ENCODE measurements at regions of chr7 and their contacts with region 1.

Region 1: DNA sequence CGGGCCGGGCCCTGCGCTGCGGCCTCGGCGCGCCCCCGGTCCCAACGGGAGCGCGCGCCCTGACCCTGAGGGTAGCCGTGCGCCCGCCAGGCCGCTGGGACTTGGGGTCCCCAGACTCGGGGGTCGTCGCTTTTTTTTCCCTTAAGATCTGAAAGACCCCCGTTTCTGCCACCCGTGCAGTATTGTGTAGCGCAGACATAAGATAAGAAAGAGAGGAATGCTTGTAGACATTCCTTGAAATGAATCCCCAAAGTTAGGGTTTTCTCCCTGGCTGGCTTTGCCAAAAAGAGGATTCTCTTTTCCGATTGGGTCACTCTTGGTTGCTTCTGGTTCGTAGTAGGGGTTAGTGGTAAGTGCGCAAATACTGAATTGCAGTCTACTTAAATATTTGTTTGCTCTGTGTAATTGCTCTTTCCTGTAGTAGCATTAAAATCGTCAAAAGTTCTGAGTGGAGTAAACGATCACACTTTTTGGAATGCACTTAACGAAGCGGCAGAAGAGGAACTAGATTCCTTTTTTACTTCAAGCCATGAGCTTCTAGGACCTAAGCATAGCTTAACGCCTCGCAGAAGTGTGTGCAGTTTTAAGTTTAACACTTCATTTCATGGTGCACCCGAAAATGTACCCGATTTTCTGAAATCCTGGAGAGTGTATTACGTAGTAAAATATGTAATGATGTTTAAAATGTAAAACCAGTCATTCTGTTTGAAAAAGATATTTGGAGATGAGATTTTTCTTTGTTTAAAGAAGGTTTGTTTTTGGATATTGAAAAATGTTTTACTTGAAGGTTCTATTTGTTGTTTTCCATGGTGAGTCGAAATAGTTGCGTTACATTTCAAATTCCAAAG is 1.3 kb downstream of the CUL1 start:
- DNase-seq: no peak
- ATAC-seq: no peak

Region 2: DNA sequence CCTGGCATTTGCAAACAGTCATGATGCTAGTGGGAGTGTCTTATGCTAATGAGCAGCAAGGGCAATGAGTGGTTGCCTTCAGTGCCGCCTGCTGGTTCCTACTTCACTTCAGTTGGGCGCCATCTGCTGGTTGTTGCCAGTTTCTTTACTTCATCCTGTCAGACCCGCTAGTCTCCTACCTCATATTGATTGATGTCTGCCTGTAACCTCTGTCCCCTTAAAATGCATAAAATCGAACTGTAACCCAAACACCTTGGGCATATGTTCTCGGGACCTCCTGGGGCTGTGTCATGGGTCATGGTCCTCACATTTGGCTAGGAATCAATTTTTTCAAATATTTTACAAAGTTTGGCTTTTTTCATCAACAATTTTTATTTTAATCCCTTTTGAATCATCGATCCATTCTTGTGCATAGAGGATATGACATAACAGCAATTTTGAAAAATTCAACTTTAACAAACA is 172.3 kb before region 1 on chr7:
- intact Hi-C with region 1: no loop called
- DNase-seq: peak; percentile 69
- ATAC-seq: peak; percentile 47

Region 3: GRCh38 chr7:148773334-148773733 is 73.3 kb after region 1 on chr7:
- intact Hi-C with region 1: loop called (anchors 10 kb)
- DNase-seq: no peak
- ATAC-seq: no peak

Region 4: DNA sequence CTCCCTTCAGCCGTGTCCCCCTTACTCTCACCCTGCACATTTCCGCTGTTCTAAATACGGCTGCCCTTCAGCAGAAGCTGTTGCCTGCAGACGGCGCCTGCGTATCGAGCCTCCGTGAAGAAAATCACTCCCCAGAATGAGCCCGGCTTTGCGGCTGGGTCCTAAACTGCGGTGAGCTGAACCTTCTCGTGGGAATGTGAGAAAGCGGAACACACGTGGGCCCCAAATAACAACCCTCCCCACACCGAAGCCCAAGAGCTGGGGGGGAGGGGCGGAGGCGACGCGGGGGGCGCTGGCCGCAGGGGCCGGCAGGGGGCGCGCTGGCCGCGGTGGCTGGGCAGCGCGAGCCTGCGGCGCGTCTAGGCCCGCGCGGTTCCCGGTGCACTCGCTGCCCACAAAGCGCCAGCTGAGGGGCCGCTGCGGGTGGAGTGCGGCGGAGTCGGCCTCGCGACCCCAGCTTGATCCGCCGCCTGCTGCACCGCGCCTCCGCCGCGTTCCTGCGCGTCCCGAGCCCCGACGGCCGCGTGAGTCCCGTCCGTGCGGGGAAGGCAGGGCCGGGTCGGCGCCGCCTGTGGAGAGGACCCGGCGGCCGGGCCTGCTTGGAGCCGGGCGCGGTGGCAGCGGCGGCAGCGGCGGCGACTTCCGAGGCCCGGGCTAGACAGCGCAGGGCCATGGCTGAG is 447.2 kb after region 1 on chr7 and contains the start of gene ZNF398:
- intact Hi-C with region 1: no loop called
- DNase-seq: peak; percentile 89
- ATAC-seq: peak; percentile 93
- total RNA-seq, gene ZNF398: 6.6 TPM

Measured in left ventricle myocardium superior (tissue), 1 donor.